ENCODE measurements at regions of chr10 and their contacts with region 1.

Region 1: GRCh38 chr10:126421754-126422394 is 33.6 kb upstream of the ADAM12 start:
- DNase-seq: no peak
- H3K4me3 ChIP-seq: no peak overlapping the region
- H3K27ac ChIP-seq: no peak overlapping the region
- H3K4me1 ChIP-seq: no peaks in the 10 kb centered on the region
- H3K27me3 ChIP-seq: no peaks in the 10 kb centered on the region
- CTCF ChIP-seq: no peak
- POLR2A ChIP-seq: no peak

Region 2: GRCh38 chr10:126439947-126440346 is 18.1 kb after region 1 on chr10:
- CTCF ChIA-PET with region 1: no interaction called
- POLR2A ChIA-PET with region 1: no interaction called
- dilution Hi-C with region 1: no loop called
- intact Hi-C with region 1: loop called (anchors 2 kb)
- DNase-seq: no peak
- H3K4me3 ChIP-seq: no peak overlapping the region
- H3K27ac ChIP-seq: no peak overlapping the region
- H3K4me1 ChIP-seq: no peaks in the 10 kb centered on the region
- H3K27me3 ChIP-seq: no peaks in the 10 kb centered on the region
- CTCF ChIP-seq: no peak
- POLR2A ChIP-seq: no peak